Left ventricle myocardium inferior (tissue), 1 donor: ENCODE measurements at regions of chr12 and their contacts with region 1.

Region 1: GRCh38 chr12:47032644-47033043 is 46.8 kb upstream of the PCED1B start:
- DNase-seq: no peak
- H3K4me3 ChIP-seq: no peak overlapping the region
- H3K27ac ChIP-seq: no peak overlapping the region
- H3K4me1 ChIP-seq: peaks cover 6% of the 10 kb centered on the region
- H3K27me3 ChIP-seq: peaks cover 8% of the 10 kb centered on the region
- CTCF ChIP-seq: peak; percentile 69

Region 2: GRCh38 chr12:47307680-47308399 is 275.2 kb after region 1 on chr12:
- intact Hi-C with region 1: loop called (anchors 10 kb)
- DNase-seq: no peak
- H3K4me3 ChIP-seq: no peak overlapping the region
- H3K27ac ChIP-seq: no peak overlapping the region
- H3K4me1 ChIP-seq: no peaks in the 10 kb centered on the region
- H3K27me3 ChIP-seq: peaks cover 4% of the 10 kb centered on the region
- CTCF ChIP-seq: peak; percentile 66

Region 3: DNA sequence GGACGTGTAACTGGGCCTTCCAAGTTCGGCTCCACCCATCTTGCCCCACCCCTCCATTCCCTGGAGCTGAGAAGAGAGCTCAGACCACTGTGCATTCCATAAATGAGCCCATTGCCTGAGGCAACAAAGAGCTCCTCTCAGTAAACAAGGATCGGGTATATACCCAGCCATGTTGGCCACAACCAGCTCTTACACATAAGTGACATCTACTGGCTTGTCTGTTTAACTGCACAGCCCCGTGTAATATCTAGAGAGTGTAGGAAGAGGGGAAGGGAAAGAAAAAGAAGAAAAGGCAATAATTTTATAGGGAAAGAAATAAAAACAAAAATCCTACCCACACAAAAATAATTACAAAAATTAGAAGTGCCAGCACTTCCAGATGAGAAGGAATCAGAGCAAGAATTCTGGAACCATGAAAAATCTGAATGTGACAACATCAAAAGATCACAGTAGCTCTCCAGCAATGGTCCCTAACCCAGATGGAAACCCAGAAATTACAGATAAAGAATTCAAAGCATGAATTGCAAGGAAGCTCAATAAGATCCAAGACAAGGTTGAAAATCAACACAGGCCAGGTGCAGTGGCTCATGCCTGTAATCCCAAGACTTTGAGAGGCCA is 365.1 kb after region 1 on chr12:
- intact Hi-C with region 1: loop called (anchors 10 kb)
- DNase-seq: no peak
- H3K4me3 ChIP-seq: no peak overlapping the region
- H3K27ac ChIP-seq: no peak overlapping the region
- H3K4me1 ChIP-seq: peaks cover 2% of the 10 kb centered on the region
- H3K27me3 ChIP-seq: no peaks in the 10 kb centered on the region
- CTCF ChIP-seq: peak; percentile 53